ENCODE measurements at regions of chr17 and their contacts with region 1.

Region 1: DNA sequence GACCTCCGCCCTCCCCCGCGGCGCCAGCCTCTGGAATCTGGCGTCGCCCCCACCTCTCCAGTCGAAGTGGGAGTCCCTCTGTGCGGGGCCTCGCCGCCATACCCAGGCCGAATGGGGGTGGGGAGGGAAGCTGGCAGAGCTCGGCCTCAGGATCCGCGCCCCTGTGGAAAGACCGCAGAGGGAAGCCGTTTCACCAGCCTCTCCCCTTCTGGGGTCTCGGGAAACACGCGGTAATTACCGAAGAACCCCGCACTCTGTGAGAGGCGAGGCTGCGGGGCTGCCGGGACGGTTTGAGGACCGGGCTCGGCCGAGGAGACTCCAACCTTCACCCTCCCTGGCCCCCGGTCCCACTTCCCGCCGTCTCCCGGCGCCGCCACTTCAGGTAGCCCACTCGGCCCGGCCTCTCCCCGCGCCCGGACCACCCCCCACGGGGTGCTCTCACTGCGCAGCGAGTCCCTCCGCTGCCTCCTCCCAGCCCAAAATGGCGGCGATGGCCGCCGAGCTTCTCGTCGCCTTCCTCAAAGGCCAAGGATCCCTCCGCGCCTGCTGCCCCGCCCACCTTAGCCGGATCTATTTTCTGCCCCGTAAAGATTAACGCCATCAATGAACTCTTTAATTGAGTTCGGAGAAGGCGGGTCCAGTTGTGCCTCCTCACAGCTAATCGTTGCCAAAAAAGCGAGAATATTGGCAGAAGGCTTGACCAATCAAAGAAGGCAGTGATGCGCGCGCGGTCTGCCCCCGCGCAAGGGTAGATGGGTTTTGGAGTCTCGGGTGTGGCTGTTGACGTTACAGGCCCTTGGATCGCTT is 453 bp upstream of the HEXIM2 start:
- DNase-seq: peak; percentile 98
- ATAC-seq: peak; percentile 96

Region 2: GRCh38 chr17:45148183-45149036 is 12.8 kb before region 1 on chr17 and contains the start of gene HEXIM1:
- intact Hi-C with region 1: loop called (anchors 1 kb)
- DNase-seq: peak; percentile 100
- ATAC-seq: peak; percentile 78
- total RNA-seq, gene HEXIM1: 31.2 TPM